Esophagus squamous epithelium (tissue), 5 donors: ENCODE measurements at regions of chr1 and their contacts with region 1.

Region 1: DNA sequence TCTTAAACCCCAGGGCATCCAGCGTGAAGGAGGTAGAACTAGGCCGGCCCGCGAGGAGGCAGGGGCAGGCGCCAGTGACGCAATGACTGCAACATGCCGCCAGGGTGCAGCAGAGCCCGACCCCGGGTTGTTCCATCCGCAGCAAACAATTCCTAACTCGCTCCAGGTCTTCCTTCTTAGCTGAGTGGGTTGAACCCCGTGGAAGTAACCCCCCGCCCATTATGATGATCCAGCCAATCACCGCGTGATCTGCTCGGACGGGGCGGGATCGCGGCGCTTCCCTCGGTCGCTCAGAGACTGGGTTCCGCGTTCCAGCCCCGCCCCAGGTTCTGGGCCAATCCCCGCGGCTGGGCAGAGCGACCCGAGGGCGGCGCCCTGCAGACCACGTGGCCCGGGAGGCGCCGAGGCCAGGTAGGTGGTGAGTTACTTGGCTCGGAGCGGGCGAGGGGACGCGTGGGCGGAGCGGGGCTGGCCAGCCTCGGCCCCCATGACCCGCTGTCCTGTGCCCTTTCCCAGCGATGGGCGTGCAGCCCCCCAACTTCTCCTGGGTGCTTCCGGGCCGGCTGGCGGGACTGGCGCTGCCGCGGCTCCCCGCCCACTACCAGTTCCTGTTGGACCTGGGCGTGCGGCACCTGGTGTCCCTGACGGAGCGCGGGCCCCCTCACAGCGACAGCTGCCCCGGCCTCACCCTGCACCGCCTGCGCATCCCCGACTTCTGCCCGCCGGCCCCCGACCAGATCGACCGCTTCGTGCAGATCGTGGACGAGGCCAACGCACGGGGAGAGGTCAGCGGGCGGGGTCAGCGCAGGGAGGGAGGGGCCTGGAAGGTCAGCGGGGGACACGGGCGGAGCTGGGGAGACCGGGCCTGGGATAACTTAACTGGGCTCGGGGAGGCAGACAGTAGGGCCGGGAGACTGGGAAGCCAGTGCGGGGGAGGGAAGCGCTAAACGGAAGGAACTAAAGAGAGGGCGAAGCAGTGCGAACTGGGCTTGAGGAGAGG is at the start of gene DUSP23:
- DNase-seq: peak; percentile 72
- H3K4me3 ChIP-seq: peak within 1 kb of the TSS; percentile 82 to 95 (median 91)
- H3K27ac ChIP-seq: peak within 1 kb of the TSS; percentile 90 to 95 (median 91)
- H3K4me1 ChIP-seq: peaks cover 13 to 51% (median 19%) of the 10 kb centered on the region in 3 donors
- H3K27me3 ChIP-seq: no peaks in the 10 kb centered on the region
- CTCF ChIP-seq: peak; percentile 83 to 98 (median 94)
- POLR2A ChIP-seq: peak in 3 of 4 donors; percentile 61 to 89 (median 79)
- total RNA-seq, gene DUSP23: 65.2 to 103 (median 91.3) TPM

Region 2: GRCh38 chr1:159580340-159580739 is 200.5 kb before region 1 on chr1:
- intact Hi-C with region 1: no loop called
- DNase-seq: no peak
- H3K4me3 ChIP-seq: no peak overlapping the region
- H3K27ac ChIP-seq: no peak overlapping the region
- H3K4me1 ChIP-seq: no peaks in the 10 kb centered on the region
- H3K27me3 ChIP-seq: no peaks in the 10 kb centered on the region
- CTCF ChIP-seq: no peak
- POLR2A ChIP-seq: no peak

Region 3: DNA sequence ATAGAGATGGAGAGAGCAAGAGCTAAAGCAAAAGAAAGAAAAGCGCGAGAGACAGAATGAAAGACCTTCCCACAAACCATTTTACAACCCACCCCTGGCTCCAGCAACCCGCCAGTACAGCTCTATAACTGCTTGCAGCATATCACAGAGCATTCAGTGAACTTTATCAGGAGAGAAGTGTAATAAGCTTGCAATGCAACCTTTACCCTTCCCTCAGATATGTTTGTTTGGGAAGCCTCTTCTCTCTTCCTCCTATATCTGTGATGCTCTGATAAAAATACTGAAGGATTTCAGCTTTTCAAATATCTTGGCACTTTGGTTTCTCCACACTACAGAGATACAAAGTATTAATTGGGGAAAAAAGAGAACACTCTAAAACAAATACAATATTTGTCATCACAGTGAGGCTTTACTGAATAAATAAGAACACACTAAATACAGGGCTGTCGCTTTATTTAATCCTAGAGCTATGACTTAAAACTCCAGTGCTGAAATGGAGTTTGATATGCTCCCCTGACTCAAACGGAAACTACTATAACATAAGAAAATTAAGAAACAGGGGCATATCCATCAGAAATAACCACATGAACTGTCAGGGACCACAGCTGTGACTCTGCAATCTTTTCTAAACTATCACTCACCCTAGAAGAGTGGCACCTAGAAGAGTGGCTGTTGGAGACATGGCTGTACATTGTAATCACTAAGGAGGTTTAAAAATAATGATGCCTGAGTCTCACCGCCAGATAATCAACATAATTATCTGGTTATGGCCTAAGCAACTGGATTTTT is 73.2 kb before region 1 on chr1:
- intact Hi-C with region 1: no loop called
- DNase-seq: no peak
- H3K4me3 ChIP-seq: no peak overlapping the region
- H3K27ac ChIP-seq: no peak overlapping the region
- H3K4me1 ChIP-seq: no peaks in the 10 kb centered on the region
- H3K27me3 ChIP-seq: no peaks in the 10 kb centered on the region
- CTCF ChIP-seq: no peak
- POLR2A ChIP-seq: no peak

Region 4: DNA sequence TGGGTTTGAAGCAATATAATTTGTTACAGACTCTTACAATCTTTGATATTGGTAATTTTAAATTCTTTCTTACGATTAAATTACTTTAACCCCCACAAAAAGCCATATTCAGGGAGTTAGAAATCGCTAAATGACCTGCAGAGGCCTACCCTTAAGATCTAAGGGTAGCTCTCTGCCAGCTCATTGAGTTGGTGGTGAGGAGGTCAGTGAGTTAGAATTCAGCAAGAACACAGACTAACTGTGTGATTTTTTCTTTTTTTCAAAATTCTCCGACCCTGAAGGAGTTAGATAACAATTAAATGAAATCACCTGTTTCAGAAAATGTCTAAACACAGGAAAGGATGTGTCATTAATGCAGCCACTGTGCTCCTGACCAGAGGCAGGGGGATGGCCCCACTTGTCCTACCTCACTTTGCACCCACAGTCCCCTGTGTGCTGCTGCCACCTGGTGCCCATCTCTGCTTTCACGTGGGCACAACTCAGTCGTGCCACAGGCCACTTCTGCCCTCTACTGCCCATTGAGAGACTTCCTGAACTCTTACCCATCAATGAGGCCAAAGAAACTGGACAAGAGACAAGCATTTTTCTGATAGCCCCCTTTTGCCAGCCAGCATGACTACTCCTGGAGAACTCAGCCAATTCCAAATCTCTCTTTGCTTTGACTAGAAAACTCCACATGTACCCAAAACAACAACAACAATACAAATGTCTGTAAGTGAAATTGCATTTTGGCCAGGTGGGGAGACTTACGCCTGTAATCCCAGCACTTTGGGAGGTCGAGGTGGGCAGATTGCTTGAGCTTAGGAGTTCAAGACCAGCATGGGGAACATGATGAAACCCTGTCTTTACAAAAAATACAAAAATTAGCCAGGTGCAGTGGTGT is 110.6 kb after region 1 on chr1:
- intact Hi-C with region 1: loop called (anchors 5 kb)
- DNase-seq: peak; percentile 25
- H3K4me3 ChIP-seq: no peak overlapping the region
- H3K27ac ChIP-seq: peak overlapping the region in 1 of 4 donors; percentile 9
- H3K4me1 ChIP-seq: peaks cover 10 to 46% (median 21%) of the 10 kb centered on the region in 3 donors
- H3K27me3 ChIP-seq: no peaks in the 10 kb centered on the region
- CTCF ChIP-seq: peak; percentile 95 to 100 (median 98)
- POLR2A ChIP-seq: no peak